BJ (cell line): ENCODE measurements at regions of chr7 and their contacts with region 1.

Region 1: DNA sequence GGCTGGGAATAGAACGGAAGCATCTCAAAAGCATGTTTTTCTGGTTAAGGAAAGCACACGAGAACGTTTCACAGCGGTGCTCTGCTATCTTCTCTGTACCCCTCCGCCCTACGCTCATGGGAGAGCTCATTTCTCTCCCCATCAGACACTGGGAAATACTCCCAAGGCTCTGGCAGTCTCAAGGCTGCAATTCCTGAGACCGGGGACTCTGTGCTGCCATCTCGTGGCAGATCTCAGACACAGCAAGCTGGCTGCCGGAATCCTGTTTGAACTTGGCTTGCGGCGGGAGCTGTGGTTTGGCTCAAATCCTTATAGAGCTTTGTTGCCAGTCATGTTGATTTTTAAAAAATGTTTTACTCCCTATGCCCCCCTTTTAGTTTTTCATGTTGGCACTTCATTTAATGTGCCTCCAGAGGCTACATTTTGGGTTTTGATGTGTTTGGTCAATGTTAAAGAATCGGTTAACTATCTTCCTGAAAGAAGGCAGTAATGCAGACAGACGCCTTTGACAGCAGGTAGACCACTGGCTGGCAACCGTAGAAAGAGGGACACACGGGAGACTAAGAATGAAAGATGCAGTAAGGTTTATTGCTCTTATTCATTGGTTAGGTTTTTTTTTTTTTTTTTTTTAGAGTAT is 27.6 kb downstream of the BMPER start:
- DNase-seq: peak; percentile 52
- H3K4me3 ChIP-seq: no peak overlapping the region
- H3K27me3 ChIP-seq: no peaks in the 10 kb centered on the region
- CTCF ChIP-seq: peak; percentile 98

Region 2: DNA sequence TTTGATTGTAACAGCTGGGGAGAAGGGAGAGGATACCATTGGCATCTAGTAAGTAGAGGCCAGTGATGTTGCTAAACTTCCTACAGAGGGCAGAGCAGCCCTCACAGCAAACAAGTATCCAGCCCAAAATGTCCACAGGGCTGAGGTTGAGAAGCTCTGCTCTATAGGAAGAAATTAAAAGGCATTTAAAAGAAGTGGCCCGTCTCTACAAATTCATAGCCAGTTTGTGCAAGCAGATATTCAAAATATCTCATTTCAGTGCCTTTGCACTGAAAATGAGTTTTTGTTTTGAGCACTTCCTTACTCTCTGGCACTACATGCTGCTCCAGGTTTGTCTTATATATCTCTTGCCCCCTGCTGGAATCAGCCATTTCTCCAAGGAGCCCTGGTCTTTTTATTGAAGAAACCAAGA is 473.6 kb before region 1 on chr7:
- CTCF ChIA-PET with region 1: interaction called, 13 read pairs
- POLR2A ChIA-PET with region 1: no interaction called
- DNase-seq: peak; percentile 14
- H3K4me3 ChIP-seq: no peak overlapping the region
- H3K27me3 ChIP-seq: no peaks in the 10 kb centered on the region
- CTCF ChIP-seq: peak; percentile 75

Region 3: GRCh38 chr7:33904681-33905388 is 28.1 kb before region 1 on chr7:
- CTCF ChIA-PET with region 1: interaction called, 11 read pairs
- POLR2A ChIA-PET with region 1: interaction called, 3 read pairs
- DNase-seq: no peak
- H3K4me3 ChIP-seq: peak overlapping the region; percentile 57
- H3K27me3 ChIP-seq: no peaks in the 10 kb centered on the region
- CTCF ChIP-seq: no peak; the same call in none of the 2 replicates

Region 4: GRCh38 chr7:33952824-33953223 is 19.9 kb after region 1 on chr7:
- CTCF ChIA-PET with region 1: interaction called, 17 read pairs
- POLR2A ChIA-PET with region 1: no interaction called
- DNase-seq: no peak
- H3K4me3 ChIP-seq: no peak overlapping the region
- H3K27me3 ChIP-seq: no peaks in the 10 kb centered on the region
- CTCF ChIP-seq: no peak

Region 5: GRCh38 chr7:34091323-34091917 is 158.5 kb after region 1 on chr7:
- CTCF ChIA-PET with region 1: interaction called, 13 read pairs
- POLR2A ChIA-PET with region 1: no interaction called
- DNase-seq: no peak
- H3K4me3 ChIP-seq: no peak overlapping the region
- H3K27me3 ChIP-seq: no peaks in the 10 kb centered on the region
- CTCF ChIP-seq: peak; percentile 52